ENCODE measurements at regions of chr11 and their contacts with region 1.

Region 1: DNA sequence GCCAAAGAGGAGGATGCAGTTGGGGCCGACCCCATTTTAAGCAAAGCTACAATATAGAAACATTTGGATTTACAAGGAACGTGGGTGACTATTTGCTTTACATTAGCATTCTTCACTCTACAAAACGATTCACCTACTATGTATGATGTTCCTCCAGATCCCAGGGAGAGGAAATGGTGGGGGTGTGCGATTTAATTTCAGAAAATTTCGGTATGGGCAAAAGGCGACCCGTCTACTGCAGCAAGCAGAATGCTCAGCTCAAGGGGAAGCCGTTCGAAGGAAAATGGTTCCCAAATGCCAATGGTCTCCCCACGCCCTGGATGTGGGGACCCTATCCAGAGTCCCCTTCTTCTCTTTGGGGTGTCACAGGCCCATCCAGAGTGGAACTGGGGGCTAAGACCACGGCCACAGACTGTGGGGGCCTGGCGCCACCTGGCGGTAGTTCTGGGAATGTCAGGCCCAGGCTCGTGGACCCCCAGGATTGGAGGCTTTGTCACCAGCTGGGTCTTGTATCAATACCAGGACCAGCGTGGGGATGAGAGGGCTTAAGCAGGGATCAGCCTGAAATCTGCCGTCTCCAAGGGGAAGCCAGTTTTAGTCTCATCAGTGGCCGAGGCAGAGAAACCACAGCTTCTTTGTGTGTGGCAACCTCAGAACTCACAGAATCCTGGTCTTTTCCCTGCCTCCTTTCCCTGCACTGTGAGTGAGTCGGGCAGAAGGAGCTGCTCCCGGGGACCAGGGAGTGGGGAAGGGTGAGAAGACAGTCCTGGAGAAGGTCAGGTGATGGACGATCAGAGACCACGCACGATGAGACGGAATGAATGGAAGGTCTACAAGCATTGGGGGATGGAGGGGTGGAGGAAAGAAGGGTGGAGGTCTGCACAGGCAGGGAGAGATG is 8.4 kb downstream of the LRRC10B start:
- DNase-seq: peak; percentile 42
- H3K4me3 Mint-ChIP-seq: no peak overlapping the region
- H3K27ac Mint-ChIP-seq: no peak overlapping the region
- H3K4me1 Mint-ChIP-seq: peaks cover 4% of the 10 kb centered on the region
- H3K27me3 Mint-ChIP-seq: peaks cover 2% of the 10 kb centered on the region

Region 2: DNA sequence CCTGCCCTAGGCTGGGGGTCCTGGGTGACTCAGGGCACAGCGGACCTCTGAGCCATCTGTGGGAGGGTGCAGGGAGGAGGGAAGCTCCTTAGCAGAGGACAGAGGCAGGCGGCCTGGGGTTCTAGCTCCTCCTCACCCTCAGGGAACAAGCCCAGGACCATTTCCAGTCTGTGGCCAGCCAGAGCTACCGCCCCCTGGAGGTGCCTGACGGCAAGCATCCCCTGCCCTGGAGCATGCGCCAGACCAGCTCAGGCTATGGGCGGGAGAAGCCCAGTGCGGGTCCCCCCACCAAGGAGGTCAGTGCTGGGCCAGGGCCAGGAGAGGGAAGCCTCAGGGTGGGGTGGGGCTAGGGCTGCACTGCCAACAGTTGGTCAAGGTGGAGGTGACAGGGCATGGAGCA is 34.4 kb before region 1 on chr11:
- CTCF ChIA-PET with region 1: interaction called, 10 read pairs
- POLR2A ChIA-PET with region 1: no interaction called
- DNase-seq: peak; percentile 20
- H3K4me3 Mint-ChIP-seq: no peak overlapping the region
- H3K27ac Mint-ChIP-seq: no peak overlapping the region
- H3K4me1 Mint-ChIP-seq: peaks cover 7% of the 10 kb centered on the region
- H3K27me3 Mint-ChIP-seq: no peaks in the 10 kb centered on the region

Region 3: GRCh38 chr11:61526956-61527731 is 10.2 kb after region 1 on chr11:
- CTCF ChIA-PET with region 1: interaction called, 20 read pairs
- POLR2A ChIA-PET with region 1: no interaction called
- DNase-seq: no peak
- H3K4me3 Mint-ChIP-seq: no peak overlapping the region
- H3K27ac Mint-ChIP-seq: no peak overlapping the region
- H3K4me1 Mint-ChIP-seq: no peaks in the 10 kb centered on the region
- H3K27me3 Mint-ChIP-seq: peaks cover 3% of the 10 kb centered on the region

Region 4: GRCh38 chr11:61532139-61533038 is 15.5 kb after region 1 on chr11:
- CTCF ChIA-PET with region 1: interaction called, 20 read pairs
- POLR2A ChIA-PET with region 1: no interaction called
- DNase-seq: peak; percentile 49
- H3K4me3 Mint-ChIP-seq: no peak overlapping the region
- H3K27ac Mint-ChIP-seq: no peak overlapping the region
- H3K4me1 Mint-ChIP-seq: no peaks in the 10 kb centered on the region
- H3K27me3 Mint-ChIP-seq: no peaks in the 10 kb centered on the region

Measured in activated CD4-positive, alpha-beta T cell treated with anti-CD3 and anti-CD28 coated beads, Interleukin-2, amount 10 ng/mL, durations not matched to agents 7 days and 5 days (primary cell).